Kidney (tissue), 22 donors: ENCODE measurements at regions of chr20 and their contacts with region 1.

Region 1: DNA sequence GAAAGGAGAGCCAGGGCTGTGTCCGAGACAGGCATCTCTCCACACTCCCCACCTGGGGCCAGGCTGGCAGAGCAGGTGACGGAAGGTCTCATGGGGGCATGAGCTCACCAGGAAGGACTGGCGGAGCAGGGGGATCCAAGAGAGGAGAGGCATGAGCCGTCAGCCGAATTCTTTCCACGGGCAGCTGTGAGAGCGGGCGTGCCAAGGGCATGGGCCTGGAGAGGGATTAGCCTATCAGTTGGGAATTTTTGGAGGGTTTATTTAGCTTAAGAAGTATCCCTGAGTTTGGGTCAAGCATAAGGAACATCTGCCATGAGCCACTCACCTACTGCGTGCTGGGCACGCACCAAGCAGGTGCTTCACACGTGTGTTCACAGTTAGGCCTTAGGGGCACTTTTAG is 60.2 kb upstream of the ZNFX1 start:
- DNase-seq: no peak
- H3K4me3 ChIP-seq: no peak overlapping the region
- H3K27ac ChIP-seq: no peak overlapping the region
- H3K4me1 ChIP-seq: no peaks in the 10 kb centered on the region
- H3K27me3 ChIP-seq: no peaks in the 10 kb centered on the region
- CTCF ChIP-seq: no peak

Region 2: DNA sequence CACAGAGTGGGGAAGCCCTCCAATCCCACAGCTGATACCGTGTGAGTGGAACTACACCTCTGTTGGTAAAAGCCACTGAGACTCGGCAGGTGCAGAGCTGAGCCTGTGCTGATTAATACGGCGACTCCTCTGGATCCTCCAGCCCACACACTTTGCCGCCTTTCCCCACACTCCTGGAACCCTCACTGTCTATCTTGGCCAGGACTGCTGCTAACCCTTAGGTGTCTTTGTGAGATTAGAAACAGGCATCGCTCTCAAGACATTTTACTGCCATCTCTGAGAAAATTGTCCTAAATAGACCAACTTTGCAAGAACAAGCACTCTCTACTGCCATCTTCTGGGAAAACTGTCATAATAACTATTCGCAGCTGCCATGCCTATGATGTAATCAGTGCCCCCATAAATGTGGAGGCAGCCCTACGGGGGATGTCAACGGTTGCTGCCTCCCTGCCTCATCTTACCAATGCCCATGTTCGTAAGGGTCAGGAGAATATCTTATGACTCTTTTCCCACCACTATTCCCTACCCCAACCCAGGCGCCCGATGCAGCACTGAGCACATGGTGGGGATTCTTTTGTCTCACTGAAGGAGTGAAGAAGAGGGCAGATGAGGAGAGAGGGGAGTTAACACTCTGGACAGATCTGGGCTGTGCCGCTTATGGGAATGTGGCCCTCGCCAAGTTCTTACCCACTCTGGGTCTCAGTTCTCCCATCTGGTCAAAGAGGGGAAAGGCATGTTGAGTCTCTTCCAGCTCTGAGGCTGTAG is 170.6 kb after region 1 on chr20:
- intact Hi-C with region 1: loop called (anchors 10 kb)
- DNase-seq: peak in 2 of 5 donors; percentile 68 to 76
- H3K4me3 ChIP-seq: no peak overlapping the region
- H3K27ac ChIP-seq: no peak overlapping the region
- H3K4me1 ChIP-seq: no peaks in the 10 kb centered on the region
- H3K27me3 ChIP-seq: no peaks in the 10 kb centered on the region
- CTCF ChIP-seq: peak; percentile 39